ENCODE measurements at regions of chr17 and their contacts with region 1.

Region 1: DNA sequence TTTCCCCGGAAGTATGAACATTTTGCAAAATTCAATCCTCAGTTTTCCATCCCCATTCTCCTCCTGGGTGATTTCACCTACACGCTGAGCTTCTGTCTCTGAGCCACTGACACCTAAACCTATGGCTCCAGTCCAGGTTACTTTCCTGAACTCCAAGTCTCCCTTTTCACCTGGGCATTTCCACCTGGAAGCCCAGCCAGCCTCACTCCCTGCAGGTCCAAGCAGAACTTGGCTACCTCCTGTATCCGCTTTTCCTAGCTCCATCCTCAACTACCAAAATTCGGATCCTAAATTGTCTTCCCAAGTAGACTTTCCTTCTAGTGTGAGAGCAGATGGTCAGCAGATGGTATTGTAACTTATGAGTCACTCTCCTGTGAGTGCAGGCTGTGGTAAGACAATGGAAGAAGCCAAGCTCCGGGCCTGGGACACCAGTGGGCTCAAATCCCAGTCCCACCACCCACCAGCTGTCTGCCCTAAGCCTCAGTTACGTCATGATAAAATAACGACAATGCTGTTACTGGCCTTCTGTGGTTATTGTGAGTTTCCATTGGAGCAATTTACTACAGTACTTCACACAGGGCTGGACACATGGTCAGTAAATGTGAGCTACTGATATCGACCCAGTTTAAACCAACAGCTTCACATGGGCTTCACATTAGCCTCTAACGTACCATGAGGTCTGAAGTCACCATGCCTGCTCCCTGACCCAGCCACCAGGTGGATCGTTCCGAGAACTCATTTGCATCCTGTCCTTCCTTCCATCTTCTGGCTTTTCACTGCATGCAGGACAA is 33.3 kb downstream of the PECAM1 start:
- DNase-seq: peak; percentile 98
- H3K4me3 Mint-ChIP-seq: peak overlapping the region; percentile 15
- H3K27ac Mint-ChIP-seq: peak overlapping the region; percentile 76
- H3K4me1 Mint-ChIP-seq: peaks cover 36% of the 10 kb centered on the region
- H3K27me3 Mint-ChIP-seq: no peaks in the 10 kb centered on the region
- CTCF ChIP-seq: no peak

Region 2: DNA sequence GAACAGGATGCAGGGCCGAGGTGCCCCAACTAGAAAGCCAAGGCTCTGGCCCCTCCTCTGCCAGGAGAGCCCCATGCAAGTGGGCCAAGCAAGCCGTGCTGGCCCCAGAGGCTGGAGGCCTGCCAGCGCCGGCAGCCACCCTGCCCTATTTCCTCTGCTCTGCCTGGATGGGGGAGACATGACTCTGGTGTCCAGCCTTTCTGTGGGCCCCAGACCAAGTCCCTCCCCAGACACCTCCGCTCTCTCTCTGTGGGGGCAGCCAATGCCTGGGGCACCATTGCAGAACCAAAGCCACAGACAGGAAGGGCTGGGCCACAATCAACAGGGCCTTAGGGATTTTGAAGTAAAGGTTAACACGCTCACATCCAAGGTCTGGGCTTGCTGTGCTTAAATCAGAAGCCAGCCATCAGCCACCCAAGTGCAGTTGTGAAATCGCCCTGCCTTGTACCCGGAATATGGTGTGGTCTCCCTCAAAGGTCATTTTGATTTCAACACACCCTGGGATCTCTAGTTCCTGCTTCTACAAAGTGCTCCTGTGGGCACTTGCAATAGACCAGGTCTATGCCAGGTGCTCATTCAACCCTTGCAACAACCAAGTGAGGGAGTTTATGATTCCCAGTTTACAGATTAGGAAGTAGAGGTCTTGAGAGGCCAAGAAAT is 30.9 kb before region 1 on chr17:
- CTCF ChIA-PET with region 1: interaction called, 5 read pairs
- POLR2A ChIA-PET with region 1: interaction called, 5 read pairs
- intact Hi-C with region 1: loop called (anchors 2 kb)
- DNase-seq: peak; percentile 100
- H3K4me3 Mint-ChIP-seq: no peak overlapping the region
- H3K27ac Mint-ChIP-seq: peak overlapping the region; percentile 50
- H3K4me1 Mint-ChIP-seq: peaks cover 7% of the 10 kb centered on the region
- H3K27me3 Mint-ChIP-seq: no peaks in the 10 kb centered on the region
- CTCF ChIP-seq: no peak

Measured in MCF 10A (cell line).